ENCODE measurements at regions of chr1 and their contacts with region 1.

Region 1: GRCh38 chr1:89125913-89126580 is at the start of gene GBP2:
- DNase-seq: peak; percentile 32
- H3K4me3 Mint-ChIP-seq: peak within 1 kb of the TSS; percentile 95
- H3K27ac Mint-ChIP-seq: peak within 1 kb of the TSS; percentile 97
- H3K4me1 Mint-ChIP-seq: peaks cover 65% of the 10 kb centered on the region
- H3K27me3 Mint-ChIP-seq: no peaks in the 10 kb centered on the region
- total RNA-seq, gene GBP2: 225 and 229 TPM in 2 replicates

Region 2: GRCh38 chr1:89041119-89041641 is 84.9 kb before region 1 on chr1:
- intact Hi-C with region 1: loop called (anchors 1 kb)
- DNase-seq: no peak
- H3K4me3 Mint-ChIP-seq: peak overlapping the region; percentile 19
- H3K27ac Mint-ChIP-seq: peak overlapping the region; percentile 69
- H3K4me1 Mint-ChIP-seq: peaks cover 35% of the 10 kb centered on the region
- H3K27me3 Mint-ChIP-seq: peaks cover 1% of the 10 kb centered on the region

Region 3: GRCh38 chr1:89198491-89199072 is 72.5 kb after region 1 on chr1 and contains the start of gene GBP4:
- intact Hi-C with region 1: loop called (anchors 1 kb)
- DNase-seq: peak; percentile 43
- H3K4me3 Mint-ChIP-seq: peak within 1 kb of the TSS; percentile 93
- H3K27ac Mint-ChIP-seq: peak within 1 kb of the TSS; percentile 93
- H3K4me1 Mint-ChIP-seq: peaks cover 88% of the 10 kb centered on the region
- H3K27me3 Mint-ChIP-seq: no peaks in the 10 kb centered on the region
- total RNA-seq, gene GBP4: 36.8 and 37.5 TPM in 2 replicates

Region 4: DNA sequence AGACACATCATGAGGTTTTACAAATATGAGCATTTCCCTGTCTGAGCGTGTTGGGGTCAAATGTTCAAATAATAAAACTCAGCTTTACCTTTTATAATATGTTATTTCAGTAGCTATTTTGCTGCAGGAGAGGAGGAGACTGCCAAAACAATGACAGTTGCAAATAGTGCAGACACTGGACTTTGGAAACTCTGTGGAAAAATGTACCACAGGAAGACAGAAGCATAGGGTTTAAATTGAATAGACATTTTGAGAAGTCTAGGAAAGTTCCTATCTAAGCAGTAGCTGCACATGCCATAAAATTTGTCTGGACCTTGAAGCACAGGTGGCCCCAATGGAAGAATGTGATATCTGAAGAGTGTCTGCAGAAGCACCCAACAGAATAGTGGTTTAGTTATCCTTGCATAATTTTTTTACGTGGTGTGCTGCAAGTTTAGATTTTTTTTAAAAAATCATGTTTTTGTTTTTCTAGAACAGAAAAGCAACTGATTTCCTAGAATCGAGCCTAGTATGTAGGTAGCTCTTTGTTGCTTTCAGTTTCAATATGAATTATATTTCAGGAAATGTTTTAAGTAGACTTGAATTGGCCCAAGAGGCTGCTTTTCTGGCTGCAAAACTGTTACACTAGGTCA is 160.6 kb after region 1 on chr1:
- intact Hi-C with region 1: loop called (anchors 1 kb)
- DNase-seq: peak; percentile 29
- H3K4me3 Mint-ChIP-seq: peak overlapping the region; percentile 41
- H3K27ac Mint-ChIP-seq: peak overlapping the region; percentile 92
- H3K4me1 Mint-ChIP-seq: peaks cover 83% of the 10 kb centered on the region
- H3K27me3 Mint-ChIP-seq: no peaks in the 10 kb centered on the region

Region 5: DNA sequence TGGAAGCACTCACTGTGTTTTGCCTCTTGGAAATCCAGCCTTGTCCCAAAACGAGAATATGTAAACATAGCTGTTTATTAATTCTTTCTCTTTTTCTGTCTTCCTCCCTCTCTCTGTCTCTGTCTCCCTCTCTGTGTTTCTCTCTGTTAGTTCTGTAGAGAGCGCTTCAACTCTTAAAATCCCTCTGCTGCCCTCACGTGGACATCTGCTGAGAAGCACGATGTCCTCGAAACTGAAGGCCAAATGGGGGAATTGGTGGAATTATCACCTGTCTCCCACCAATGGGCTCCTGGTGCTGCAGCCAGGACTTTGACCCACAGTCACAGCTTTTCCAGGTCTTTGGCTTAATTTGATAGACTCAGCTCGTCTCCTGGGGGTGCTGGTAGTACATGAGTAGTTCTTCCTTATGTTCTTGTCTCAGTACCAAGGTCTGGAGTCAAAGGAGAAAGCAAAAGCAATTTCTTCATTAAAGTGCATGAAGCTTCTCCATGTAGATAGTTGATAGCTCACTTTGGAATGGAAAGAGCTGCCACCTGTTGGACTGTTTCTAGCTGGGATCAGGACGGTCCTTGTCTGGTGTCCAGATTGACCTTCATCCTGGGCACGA is 232.3 kb after region 1 on chr1:
- intact Hi-C with region 1: loop called (anchors 1 kb)
- DNase-seq: peak; percentile 76
- H3K4me3 Mint-ChIP-seq: peak overlapping the region; percentile 73
- H3K27ac Mint-ChIP-seq: peak overlapping the region; percentile 80
- H3K4me1 Mint-ChIP-seq: peaks cover 69% of the 10 kb centered on the region
- H3K27me3 Mint-ChIP-seq: no peaks in the 10 kb centered on the region